ENCODE measurements at regions of chr9 and their contacts with region 1.

Region 1: DNA sequence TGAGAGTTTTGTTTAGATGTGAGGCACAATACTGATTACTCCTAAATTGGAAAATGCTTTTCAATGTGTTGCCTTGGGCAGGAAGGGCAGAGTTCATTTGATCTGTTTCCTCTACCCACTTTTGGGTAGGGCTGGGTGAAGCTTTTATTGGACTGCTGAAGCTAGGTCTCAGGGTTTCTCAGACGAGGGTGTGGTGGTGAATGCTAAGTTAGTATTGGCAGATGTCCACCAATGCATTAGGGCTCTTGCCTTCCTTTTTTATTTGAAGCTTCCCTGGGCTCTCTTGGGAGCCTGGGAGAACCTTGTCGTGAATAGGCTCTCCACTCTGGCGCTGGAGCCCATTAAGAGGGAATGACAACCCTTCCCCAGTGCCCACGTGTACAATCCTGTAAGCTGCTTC is 23.1 kb downstream of the SPTAN1 start:
- DNase-seq: peak in 1 of 2 donors; percentile 40
- ATAC-seq: peak in 7 of 8 donors; percentile 63 to 90 (median 78)
- H3K4me3 ChIP-seq: no peak overlapping the region
- H3K27ac ChIP-seq: peak overlapping the region in 5 of 10 donors; percentile 5 to 61 (median 49)
- H3K4me1 ChIP-seq: peaks cover 0 to 25% (median 13%) of the 10 kb centered on the region in 9 donors
- H3K27me3 ChIP-seq: no peaks in the 10 kb centered on the region
- CTCF ChIP-seq: no peak

Region 2: DNA sequence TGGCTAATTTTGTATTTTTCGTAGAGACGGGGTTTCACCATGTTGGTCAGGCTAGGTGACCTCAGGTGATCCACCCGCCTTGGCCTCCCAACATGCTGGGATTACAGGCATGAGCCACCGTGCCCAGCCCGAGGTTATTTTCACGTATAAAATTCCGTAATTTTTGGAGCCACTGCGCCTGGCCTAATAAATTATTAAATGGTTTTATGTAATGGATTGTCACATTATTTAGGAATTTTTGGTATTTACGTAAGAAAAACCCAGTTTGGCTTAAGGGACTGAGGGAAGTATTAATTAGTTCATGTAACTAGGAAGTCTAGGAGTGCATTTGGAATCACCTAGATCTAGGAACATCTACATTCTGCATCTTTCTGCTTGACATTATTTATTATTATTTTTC is 62.6 kb before region 1 on chr9:
- intact Hi-C with region 1: loop called in 1 of 10 experiments (anchors 10 kb)
- DNase-seq: no peak
- ATAC-seq: no peak
- H3K4me3 ChIP-seq: no peak overlapping the region
- H3K27ac ChIP-seq: no peak overlapping the region
- H3K4me1 ChIP-seq: no peaks in the 10 kb centered on the region
- H3K27me3 ChIP-seq: no peaks in the 10 kb centered on the region
- CTCF ChIP-seq: no peak

Region 3: DNA sequence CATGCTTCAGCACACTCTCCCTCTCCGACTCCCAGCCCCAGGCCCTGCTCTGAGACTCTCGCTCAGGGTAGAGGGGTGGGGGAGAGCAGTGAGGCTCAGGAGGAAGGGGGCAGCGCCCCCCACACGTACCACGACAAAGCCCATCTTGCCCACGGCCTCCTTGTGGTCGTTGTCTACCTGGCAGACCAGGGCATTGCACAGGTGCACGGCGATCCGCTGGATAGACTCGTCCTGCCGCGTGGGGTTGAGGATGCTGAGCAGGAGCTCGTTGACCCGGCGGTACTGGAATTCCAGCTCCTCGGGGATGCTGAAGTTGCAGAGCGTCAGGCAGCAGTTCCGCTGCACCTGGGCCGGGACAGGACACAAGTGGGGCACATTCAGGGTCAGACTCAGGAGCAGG is 166.9 kb after region 1 on chr9:
- intact Hi-C with region 1: no loop called
- DNase-seq: no peak
- ATAC-seq: peak in 1 of 8 donors; percentile 28
- H3K4me3 ChIP-seq: no peak overlapping the region
- H3K27ac ChIP-seq: no peak overlapping the region
- H3K4me1 ChIP-seq: no peaks in the 10 kb centered on the region
- H3K27me3 ChIP-seq: no peaks in the 10 kb centered on the region
- CTCF ChIP-seq: no peak

Region 4: GRCh38 chr9:129006328-129007034 is 431.0 kb after region 1 on chr9:
- intact Hi-C with region 1: no loop called
- DNase-seq: peak; percentile 63 to 75
- ATAC-seq: peak; percentile 81 to 91 (median 84)
- H3K4me3 ChIP-seq: no peak overlapping the region
- H3K27ac ChIP-seq: peak overlapping the region in 8 of 10 donors; percentile 18 to 69 (median 47)
- H3K4me1 ChIP-seq: peaks cover 0 to 25% (median 15%) of the 10 kb centered on the region in 9 donors
- H3K27me3 ChIP-seq: no peaks in the 10 kb centered on the region
- CTCF ChIP-seq: peak; percentile 59 to 94 (median 86)